Caco-2 (cell line): ENCODE measurements at regions of chr1 and their contacts with region 1.

Region 1: DNA sequence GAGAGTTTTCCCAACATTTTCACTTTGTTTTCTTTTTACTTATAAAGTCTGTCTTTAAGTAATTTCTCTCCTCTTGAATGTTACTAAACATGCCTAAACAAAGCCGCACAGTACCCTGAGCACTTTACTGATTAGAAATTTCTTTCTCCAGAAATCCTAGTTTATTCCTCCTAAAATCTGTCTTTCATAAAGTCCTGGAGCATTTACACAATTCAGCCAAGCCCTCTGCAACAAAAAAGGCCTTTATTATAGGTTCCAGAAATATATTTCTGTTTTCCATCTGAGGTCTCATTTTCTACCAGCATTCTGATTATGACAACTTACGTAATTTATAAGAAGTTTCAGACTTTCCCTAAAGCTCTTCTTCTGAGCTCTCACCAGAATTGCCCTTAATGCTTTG is 549.5 kb upstream of the OLFM3 start:
- DNase-seq: no peak
- H3K4me3 ChIP-seq: no peak overlapping the region
- H3K4me3 Mint-ChIP-seq: no peak overlapping the region
- H3K27ac Mint-ChIP-seq: no peak overlapping the region
- H3K4me1 ChIP-seq: no peaks in the 10 kb centered on the region
- H3K4me1 Mint-ChIP-seq: no peaks in the 10 kb centered on the region
- H3K27me3 ChIP-seq: no peaks in the 10 kb centered on the region
- H3K27me3 Mint-ChIP-seq: no peaks in the 10 kb centered on the region
- CTCF ChIP-seq: no peak

Region 2: GRCh38 chr1:102500758-102501157 is 45.5 kb before region 1 on chr1:
- CTCF ChIA-PET with region 1: no interaction called
- POLR2A ChIA-PET with region 1: no interaction called
- intact Hi-C with region 1: no loop called
- DNase-seq: no peak
- H3K4me3 ChIP-seq: no peak overlapping the region
- H3K4me3 Mint-ChIP-seq: no peak overlapping the region
- H3K27ac Mint-ChIP-seq: no peak overlapping the region
- H3K4me1 ChIP-seq: no peaks in the 10 kb centered on the region
- H3K4me1 Mint-ChIP-seq: no peaks in the 10 kb centered on the region
- H3K27me3 ChIP-seq: no peaks in the 10 kb centered on the region
- H3K27me3 Mint-ChIP-seq: no peaks in the 10 kb centered on the region
- CTCF ChIP-seq: no peak

Region 3: GRCh38 chr1:102529446-102529845 is 16.8 kb before region 1 on chr1:
- CTCF ChIA-PET with region 1: no interaction called
- POLR2A ChIA-PET with region 1: no interaction called
- intact Hi-C with region 1: loop called (anchors 2 kb)
- DNase-seq: no peak
- H3K4me3 ChIP-seq: no peak overlapping the region
- H3K4me3 Mint-ChIP-seq: no peak overlapping the region
- H3K27ac Mint-ChIP-seq: no peak overlapping the region
- H3K4me1 ChIP-seq: no peaks in the 10 kb centered on the region
- H3K4me1 Mint-ChIP-seq: no peaks in the 10 kb centered on the region
- H3K27me3 ChIP-seq: no peaks in the 10 kb centered on the region
- H3K27me3 Mint-ChIP-seq: no peaks in the 10 kb centered on the region
- CTCF ChIP-seq: no peak

Region 4: GRCh38 chr1:102661481-102661880 is 115.2 kb after region 1 on chr1:
- CTCF ChIA-PET with region 1: no interaction called
- POLR2A ChIA-PET with region 1: no interaction called
- intact Hi-C with region 1: no loop called
- DNase-seq: no peak
- H3K4me3 ChIP-seq: no peak overlapping the region
- H3K4me3 Mint-ChIP-seq: no peak overlapping the region
- H3K27ac Mint-ChIP-seq: no peak overlapping the region
- H3K4me1 ChIP-seq: no peaks in the 10 kb centered on the region
- H3K4me1 Mint-ChIP-seq: no peaks in the 10 kb centered on the region
- H3K27me3 ChIP-seq: no peaks in the 10 kb centered on the region
- H3K27me3 Mint-ChIP-seq: no peaks in the 10 kb centered on the region
- CTCF ChIP-seq: no peak